Activated CD4-positive, alpha-beta T cell treated with anti-CD3 and anti-CD28 coated beads for 36 hours (primary cell): ENCODE measurements at regions of chr3 and their contacts with region 1.

Region 1: DNA sequence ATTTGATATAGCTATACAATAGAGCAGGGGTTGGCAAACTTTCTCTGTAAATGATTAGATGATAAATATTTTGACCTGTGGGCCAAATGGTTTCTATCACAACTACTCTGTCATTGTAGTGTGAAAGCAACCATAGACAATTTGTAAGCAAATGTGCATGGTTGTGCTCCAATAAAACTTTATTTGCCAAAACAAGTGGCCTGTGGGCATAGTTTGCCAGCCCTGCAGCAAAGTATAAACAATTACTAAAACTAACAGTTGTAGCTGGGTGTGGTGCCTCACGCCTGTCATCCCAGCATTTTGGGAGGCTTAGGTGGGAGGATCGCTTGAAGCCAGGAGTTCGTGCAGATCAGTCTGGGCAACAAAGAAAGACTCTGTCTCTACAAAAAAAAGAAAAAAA is 61.6 kb downstream of the NBEAL2 start:
- DNase-seq: no peak
- ATAC-seq: no peak
- H3K4me3 Mint-ChIP-seq: no peak overlapping the region
- H3K27ac Mint-ChIP-seq: no peak overlapping the region
- H3K4me1 Mint-ChIP-seq: peaks cover 22% of the 10 kb centered on the region
- H3K27me3 Mint-ChIP-seq: no peaks in the 10 kb centered on the region

Region 2: GRCh38 chr3:47108546-47108945 is 67.4 kb after region 1 on chr3:
- CTCF ChIA-PET with region 1: no interaction called
- POLR2A ChIA-PET with region 1: no interaction called
- intact Hi-C with region 1: loop called in 1 of 2 experiments (anchors 2 kb)
- DNase-seq: no peak
- ATAC-seq: no peak
- H3K4me3 Mint-ChIP-seq: no peak overlapping the region
- H3K27ac Mint-ChIP-seq: no peak overlapping the region
- H3K4me1 Mint-ChIP-seq: no peaks in the 10 kb centered on the region
- H3K27me3 Mint-ChIP-seq: no peaks in the 10 kb centered on the region

Region 3: GRCh38 chr3:47121409-47121808 is 80.3 kb after region 1 on chr3:
- CTCF ChIA-PET with region 1: no interaction called
- POLR2A ChIA-PET with region 1: no interaction called
- intact Hi-C with region 1: no loop called
- DNase-seq: no peak
- ATAC-seq: no peak
- H3K4me3 Mint-ChIP-seq: no peak overlapping the region
- H3K27ac Mint-ChIP-seq: peak overlapping the region; percentile 20
- H3K4me1 Mint-ChIP-seq: peaks cover 52% of the 10 kb centered on the region
- H3K27me3 Mint-ChIP-seq: no peaks in the 10 kb centered on the region